B cell (primary cell): ENCODE measurements at regions of chr2 and their contacts with region 1.

Region 1: GRCh38 chr2:190534310-190535120 is at the start of gene NEMP2:
- DNase-seq: peak; percentile 90
- ATAC-seq: peak; percentile 78
- H3K4me3 ChIP-seq: peak within 1 kb of the TSS; percentile 80 to 92 (median 83)
- H3K4me3 Mint-ChIP-seq: peak within 1 kb of the TSS; percentile 97
- H3K27ac ChIP-seq: peak within 1 kb of the TSS; percentile 94 to 95
- H3K27ac Mint-ChIP-seq: peak within 1 kb of the TSS; percentile 100
- H3K4me1 ChIP-seq: peaks cover 27 to 33% of the 10 kb centered on the region in 2 donors
- H3K4me1 Mint-ChIP-seq: peaks cover 55% of the 10 kb centered on the region
- H3K27me3 ChIP-seq: no peaks in the 10 kb centered on the region
- H3K27me3 Mint-ChIP-seq: no peaks in the 10 kb centered on the region
- CTCF ChIP-seq: no peak
- total RNA-seq, gene NEMP2: 17.3 and 22.4 TPM in 2 replicates

Region 2: DNA sequence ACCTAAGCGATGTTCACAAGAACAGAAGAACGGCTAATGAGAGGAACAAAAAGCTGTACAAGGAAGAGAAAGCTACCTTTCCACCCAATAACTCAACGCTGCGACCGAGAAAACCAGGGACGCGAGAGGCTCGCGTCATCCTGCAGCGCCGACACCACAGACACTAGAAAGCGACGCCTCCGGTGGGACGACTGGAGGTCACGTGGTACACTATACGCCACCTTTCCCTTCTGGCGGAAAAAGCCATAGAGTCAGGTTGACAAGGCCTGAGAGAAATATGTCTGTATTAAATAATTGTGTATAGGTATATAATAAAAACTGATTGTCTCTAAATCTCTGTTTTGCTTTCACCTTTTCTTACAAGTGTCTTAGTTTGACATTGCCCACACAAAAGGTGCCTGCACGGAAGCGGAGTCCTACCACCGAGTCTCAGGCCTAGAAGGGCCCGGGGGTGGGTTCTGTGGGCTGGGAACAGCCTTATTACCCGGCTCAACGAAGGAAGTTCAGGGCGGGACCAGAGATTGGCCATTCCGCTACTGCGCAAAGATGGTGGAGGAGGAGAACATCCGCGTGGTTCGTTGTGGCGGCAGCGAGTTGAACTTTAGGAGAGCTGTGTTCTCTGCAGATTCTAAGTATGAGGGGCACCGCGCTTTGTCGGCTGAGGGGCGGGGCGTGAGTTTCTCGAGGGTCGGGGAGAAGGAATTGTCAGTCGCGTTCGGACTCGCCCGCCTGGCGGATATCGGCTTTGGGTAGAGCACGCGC is 1093.4 kb before region 1 on chr2 and contains the start of gene WDR75:
- CTCF ChIA-PET with region 1: no interaction called
- POLR2A ChIA-PET with region 1: no interaction called
- intact Hi-C with region 1: loop called (anchors 10 kb)
- DNase-seq: peak; percentile 96
- ATAC-seq: peak; percentile 95
- H3K4me3 ChIP-seq: peak within 1 kb of the TSS; percentile 78 to 97 (median 91)
- H3K4me3 Mint-ChIP-seq: peak within 1 kb of the TSS; percentile 100
- H3K27ac ChIP-seq: peak within 1 kb of the TSS; percentile 93 to 97
- H3K27ac Mint-ChIP-seq: peak within 1 kb of the TSS; percentile 99
- H3K4me1 ChIP-seq: peaks cover 14 to 23% of the 10 kb centered on the region in 2 donors
- H3K4me1 Mint-ChIP-seq: peaks cover 29% of the 10 kb centered on the region
- H3K27me3 ChIP-seq: no peaks in the 10 kb centered on the region
- H3K27me3 Mint-ChIP-seq: no peaks in the 10 kb centered on the region
- CTCF ChIP-seq: no peak
- total RNA-seq, gene WDR75: 48.3 and 51.2 TPM in 2 replicates

Region 3: GRCh38 chr2:190180313-190181122 is 354.0 kb before region 1 on chr2:
- CTCF ChIA-PET with region 1: no interaction called
- POLR2A ChIA-PET with region 1: no interaction called
- intact Hi-C with region 1: loop called (anchors 10 kb)
- DNase-seq: peak; percentile 70
- ATAC-seq: peak; percentile 89
- H3K4me3 ChIP-seq: peak overlapping the region in 4 of 5 experiments; percentile 48 to 71 (median 60)
- H3K4me3 Mint-ChIP-seq: peak overlapping the region; percentile 87
- H3K27ac ChIP-seq: no peak overlapping the region
- H3K27ac Mint-ChIP-seq: peak overlapping the region; percentile 85
- H3K4me1 ChIP-seq: peaks cover 16 to 22% of the 10 kb centered on the region in 2 donors
- H3K4me1 Mint-ChIP-seq: peaks cover 26% of the 10 kb centered on the region
- H3K27me3 ChIP-seq: peaks cover 0 to 9% (median 0%) of the 10 kb centered on the region in 4 experiments
- H3K27me3 Mint-ChIP-seq: no peaks in the 10 kb centered on the region
- CTCF ChIP-seq: peak; percentile 31

Region 4: DNA sequence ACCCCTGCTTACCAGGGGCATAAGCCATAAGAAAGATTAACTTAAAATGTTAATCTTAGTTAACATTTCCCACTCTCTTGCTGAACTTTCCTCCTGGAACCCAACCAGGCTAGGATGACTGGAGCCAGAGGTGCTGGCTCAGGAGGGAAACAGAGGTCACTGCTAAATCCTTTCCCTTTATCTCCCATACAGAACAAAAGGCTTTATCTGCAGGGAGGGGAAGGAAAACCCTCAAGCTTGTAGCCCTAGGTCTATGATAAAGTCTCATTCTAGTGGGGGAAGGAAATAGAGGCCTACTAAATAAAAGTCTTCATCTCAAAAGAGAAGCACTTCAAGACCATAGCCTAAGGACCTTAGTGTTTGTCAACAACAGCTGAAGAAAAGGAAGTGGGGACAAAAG is 233.5 kb before region 1 on chr2:
- CTCF ChIA-PET with region 1: no interaction called
- POLR2A ChIA-PET with region 1: no interaction called
- intact Hi-C with region 1: no loop called
- DNase-seq: no peak
- ATAC-seq: no peak
- H3K4me3 ChIP-seq: no peak overlapping the region
- H3K4me3 Mint-ChIP-seq: no peak overlapping the region
- H3K27ac ChIP-seq: no peak overlapping the region
- H3K27ac Mint-ChIP-seq: no peak overlapping the region
- H3K4me1 ChIP-seq: no peaks in the 10 kb centered on the region
- H3K4me1 Mint-ChIP-seq: peaks cover 4% of the 10 kb centered on the region
- H3K27me3 ChIP-seq: no peaks in the 10 kb centered on the region
- H3K27me3 Mint-ChIP-seq: no peaks in the 10 kb centered on the region
- CTCF ChIP-seq: no peak

Region 5: DNA sequence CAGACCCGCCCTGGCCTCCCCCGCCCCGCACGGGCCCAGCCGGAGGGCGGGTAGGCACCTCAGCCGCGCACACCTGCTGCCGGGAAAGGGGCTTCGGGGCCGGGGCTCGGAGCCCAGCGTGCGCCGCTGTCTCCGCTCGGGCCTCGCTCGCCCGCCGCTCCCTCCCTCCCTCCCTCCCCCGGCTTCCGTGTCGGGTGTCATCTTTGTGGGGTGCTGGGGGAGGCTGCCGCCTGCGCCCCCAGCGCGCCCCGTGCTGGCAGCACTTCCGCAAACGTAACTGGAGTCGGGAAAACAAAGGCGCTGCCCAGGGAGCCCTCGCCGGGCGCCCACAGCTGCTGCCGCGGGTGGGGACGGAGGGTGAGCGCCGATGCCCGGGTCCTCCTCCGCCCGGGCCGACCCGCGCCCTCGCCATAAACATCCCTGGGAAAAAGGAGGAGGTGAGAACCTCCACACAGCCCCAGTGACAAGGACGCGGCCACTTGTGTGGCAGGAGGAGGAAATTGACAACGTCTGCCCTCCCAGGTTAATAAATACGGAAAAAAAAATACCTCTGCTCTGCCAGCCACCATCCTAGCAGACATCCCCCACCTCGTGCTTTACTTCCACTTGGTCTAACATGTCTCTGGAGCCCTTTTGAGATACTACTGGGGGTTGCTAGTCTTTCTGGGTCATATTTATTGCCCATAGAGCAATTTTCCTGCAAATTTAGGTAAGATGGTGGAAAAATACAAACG is 125.8 kb before region 1 on chr2:
- CTCF ChIA-PET with region 1: no interaction called
- POLR2A ChIA-PET with region 1: interaction called, 15 read pairs
- intact Hi-C with region 1: loop called (anchors 2 kb)
- DNase-seq: peak; percentile 90
- ATAC-seq: peak; percentile 70
- H3K4me3 ChIP-seq: peak overlapping the region; percentile 56 to 87 (median 76)
- H3K4me3 Mint-ChIP-seq: peak overlapping the region; percentile 91
- H3K27ac ChIP-seq: peak overlapping the region; percentile 83 to 95
- H3K27ac Mint-ChIP-seq: peak overlapping the region; percentile 95
- H3K4me1 ChIP-seq: peaks cover 20 to 24% of the 10 kb centered on the region in 2 donors
- H3K4me1 Mint-ChIP-seq: peaks cover 42% of the 10 kb centered on the region
- H3K27me3 ChIP-seq: no peaks in the 10 kb centered on the region
- H3K27me3 Mint-ChIP-seq: no peaks in the 10 kb centered on the region
- CTCF ChIP-seq: no peak

Region 6: DNA sequence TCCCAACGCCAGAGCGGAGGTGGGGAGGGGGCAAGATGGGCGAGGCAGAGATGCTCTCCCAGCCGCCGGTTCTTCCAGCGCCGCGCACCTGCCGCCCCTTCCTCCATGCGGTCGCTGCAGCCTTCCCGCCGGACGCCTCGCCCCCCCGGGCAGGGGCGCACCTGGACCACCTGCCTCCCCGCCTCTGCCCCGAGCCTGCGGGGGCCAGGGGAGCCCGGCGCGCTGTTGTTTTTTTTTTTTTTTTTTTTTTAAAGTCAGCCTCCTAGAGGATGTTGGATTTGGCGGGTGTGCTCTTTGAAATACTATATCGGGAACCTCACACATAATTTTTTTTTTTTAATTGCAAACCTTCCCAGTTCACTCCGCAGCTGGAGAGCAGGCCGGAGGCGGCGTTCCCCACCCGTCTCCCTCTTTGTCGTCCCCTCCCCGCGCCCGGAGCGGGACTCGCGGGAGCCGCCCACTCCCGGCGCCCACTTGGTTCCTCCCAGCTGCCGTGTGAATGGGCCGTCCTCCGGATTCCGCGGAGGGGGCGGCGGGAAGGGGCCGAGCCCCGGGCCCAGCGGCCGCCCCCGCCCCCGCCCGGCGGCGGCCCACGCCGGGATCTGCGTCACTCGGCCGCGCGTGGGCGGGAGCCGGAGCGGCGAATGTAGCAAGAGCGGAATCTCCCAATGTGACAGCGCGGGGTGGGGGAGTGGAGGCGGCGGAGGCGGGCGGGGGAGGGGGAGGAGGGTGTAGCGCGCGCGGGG is 113.9 kb after region 1 on chr2:
- CTCF ChIA-PET with region 1: interaction called, 4 read pairs
- POLR2A ChIA-PET with region 1: interaction called, 3 read pairs
- intact Hi-C with region 1: loop called (anchors 1 kb)
- DNase-seq: peak; percentile 94
- ATAC-seq: peak; percentile 77
- H3K4me3 ChIP-seq: peak overlapping the region; percentile 34 to 89 (median 68)
- H3K4me3 Mint-ChIP-seq: peak overlapping the region; percentile 89
- H3K27ac ChIP-seq: peak overlapping the region; percentile 66 to 82
- H3K27ac Mint-ChIP-seq: peak overlapping the region; percentile 82
- H3K4me1 ChIP-seq: peaks cover 8 to 14% of the 10 kb centered on the region in 2 donors
- H3K4me1 Mint-ChIP-seq: peaks cover 25% of the 10 kb centered on the region
- H3K27me3 ChIP-seq: no peaks in the 10 kb centered on the region
- H3K27me3 Mint-ChIP-seq: no peaks in the 10 kb centered on the region
- CTCF ChIP-seq: no peak

Region 7: GRCh38 chr2:191617575-191617974 is 1083.1 kb after region 1 on chr2:
- CTCF ChIA-PET with region 1: no interaction called
- POLR2A ChIA-PET with region 1: interaction called, 3 read pairs
- intact Hi-C with region 1: loop called (anchors 10 kb)
- DNase-seq: peak; percentile 88
- ATAC-seq: peak; percentile 95
- H3K4me3 ChIP-seq: peak overlapping the region in 1 of 5 experiments; percentile 2
- H3K4me3 Mint-ChIP-seq: peak overlapping the region; percentile 62
- H3K27ac ChIP-seq: peak overlapping the region; percentile 77 to 86
- H3K27ac Mint-ChIP-seq: peak overlapping the region; percentile 88
- H3K4me1 ChIP-seq: peaks cover 23 to 29% of the 10 kb centered on the region in 2 donors
- H3K4me1 Mint-ChIP-seq: peaks cover 52% of the 10 kb centered on the region
- H3K27me3 ChIP-seq: no peaks in the 10 kb centered on the region
- H3K27me3 Mint-ChIP-seq: no peaks in the 10 kb centered on the region
- CTCF ChIP-seq: no peak